ENCODE measurements at regions of chr3 and their contacts with region 1.

Region 1: GRCh38 chr3:191388823-191389222 is 58.5 kb upstream of the UTS2B start:
- DNase-seq: no peak
- H3K4me3 ChIP-seq: no peak overlapping the region
- H3K4me3 Mint-ChIP-seq: no peak overlapping the region
- H3K27ac Mint-ChIP-seq: no peak overlapping the region
- H3K4me1 ChIP-seq: no peaks in the 10 kb centered on the region
- H3K4me1 Mint-ChIP-seq: no peaks in the 10 kb centered on the region
- H3K27me3 ChIP-seq: no peaks in the 10 kb centered on the region
- H3K27me3 Mint-ChIP-seq: no peaks in the 10 kb centered on the region
- CTCF ChIP-seq: no peak

Region 2: GRCh38 chr3:191165802-191166201 is 223.0 kb before region 1 on chr3:
- CTCF ChIA-PET with region 1: interaction called, 15 read pairs
- POLR2A ChIA-PET with region 1: no interaction called
- intact Hi-C with region 1: no loop called
- DNase-seq: no peak
- H3K4me3 ChIP-seq: no peak overlapping the region
- H3K4me3 Mint-ChIP-seq: no peak overlapping the region
- H3K27ac Mint-ChIP-seq: no peak overlapping the region
- H3K4me1 ChIP-seq: no peaks in the 10 kb centered on the region
- H3K4me1 Mint-ChIP-seq: no peaks in the 10 kb centered on the region
- H3K27me3 ChIP-seq: no peaks in the 10 kb centered on the region
- H3K27me3 Mint-ChIP-seq: peaks cover 3% of the 10 kb centered on the region
- CTCF ChIP-seq: no peak

Region 3: DNA sequence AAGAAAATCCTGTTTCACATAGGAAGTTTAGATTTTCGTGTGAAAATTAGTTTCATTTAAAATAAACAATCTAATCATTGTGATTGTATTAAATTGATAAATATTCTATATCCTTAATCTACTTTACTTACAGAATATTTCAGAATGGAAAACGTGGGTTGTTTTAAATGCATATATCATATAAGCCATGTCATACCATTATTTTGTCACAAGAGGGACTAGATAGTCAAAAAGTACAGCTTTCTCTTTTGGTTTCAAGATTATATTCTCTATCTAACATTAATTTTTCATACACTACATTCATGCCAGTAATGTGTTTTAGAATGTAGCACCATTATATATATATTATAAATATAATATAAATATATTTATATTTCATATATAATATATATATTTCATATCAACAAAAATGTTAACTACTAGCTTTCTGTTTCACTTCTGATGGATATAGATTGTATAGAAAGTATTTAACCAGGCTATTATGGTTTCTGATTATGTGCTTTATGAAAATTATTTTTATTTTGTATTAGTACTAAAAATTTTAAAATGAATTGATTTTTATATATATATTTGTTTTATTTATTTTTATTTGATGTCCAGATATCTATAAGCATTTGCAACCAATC is 144.5 kb before region 1 on chr3:
- CTCF ChIA-PET with region 1: interaction called, 3 read pairs
- POLR2A ChIA-PET with region 1: no interaction called
- intact Hi-C with region 1: loop called (anchors 2 kb)
- DNase-seq: no peak
- H3K4me3 ChIP-seq: no peak overlapping the region
- H3K4me3 Mint-ChIP-seq: no peak overlapping the region
- H3K27ac Mint-ChIP-seq: no peak overlapping the region
- H3K4me1 ChIP-seq: peaks cover 7% of the 10 kb centered on the region; the same call in 1 of the 2 replicates
- H3K4me1 Mint-ChIP-seq: peaks cover 7% of the 10 kb centered on the region
- H3K27me3 ChIP-seq: no peaks in the 10 kb centered on the region
- H3K27me3 Mint-ChIP-seq: no peaks in the 10 kb centered on the region
- CTCF ChIP-seq: peak; percentile 33 to 56

Measured in Caco-2 (cell line).